Psoas muscle (tissue), 8 donors: ENCODE measurements at regions of chr9 and their contacts with region 1.

Region 1: DNA sequence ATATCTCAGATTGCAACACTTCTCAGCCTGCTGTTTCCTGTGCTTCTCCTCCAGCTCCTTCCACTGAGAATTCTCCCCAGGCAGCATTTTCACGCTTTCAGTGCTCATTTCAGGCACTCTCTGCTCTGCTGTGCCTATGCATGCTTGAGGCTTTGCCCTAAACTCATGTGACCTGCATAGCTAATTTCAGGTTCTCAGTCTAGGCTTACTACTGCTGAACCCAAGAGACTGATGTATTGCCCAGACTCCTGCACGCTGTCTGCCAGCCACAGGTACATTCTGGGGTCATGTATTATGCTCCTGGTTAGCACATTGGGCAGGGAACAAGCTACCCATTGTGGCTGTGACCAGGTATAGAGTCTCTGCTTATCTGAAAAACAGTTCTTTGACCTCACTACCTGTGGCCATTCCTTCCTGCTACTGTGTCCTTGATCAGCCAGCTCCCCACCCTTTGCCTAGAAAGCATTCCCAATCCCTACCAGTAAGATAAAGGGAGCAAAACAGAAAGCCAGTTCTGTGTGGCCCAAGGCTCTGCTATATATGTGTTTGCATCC is 34.7 kb downstream of the PIP5K1B start:
- DNase-seq: no peak
- ATAC-seq: no peak
- H3K4me3 ChIP-seq: no peak overlapping the region
- H3K27ac ChIP-seq: no peak overlapping the region
- H3K4me1 ChIP-seq: no peaks in the 10 kb centered on the region
- H3K27me3 ChIP-seq: peaks cover 0 to 4% (median 0%) of the 10 kb centered on the region in 3 donors
- CTCF ChIP-seq: no peak

Region 2: DNA sequence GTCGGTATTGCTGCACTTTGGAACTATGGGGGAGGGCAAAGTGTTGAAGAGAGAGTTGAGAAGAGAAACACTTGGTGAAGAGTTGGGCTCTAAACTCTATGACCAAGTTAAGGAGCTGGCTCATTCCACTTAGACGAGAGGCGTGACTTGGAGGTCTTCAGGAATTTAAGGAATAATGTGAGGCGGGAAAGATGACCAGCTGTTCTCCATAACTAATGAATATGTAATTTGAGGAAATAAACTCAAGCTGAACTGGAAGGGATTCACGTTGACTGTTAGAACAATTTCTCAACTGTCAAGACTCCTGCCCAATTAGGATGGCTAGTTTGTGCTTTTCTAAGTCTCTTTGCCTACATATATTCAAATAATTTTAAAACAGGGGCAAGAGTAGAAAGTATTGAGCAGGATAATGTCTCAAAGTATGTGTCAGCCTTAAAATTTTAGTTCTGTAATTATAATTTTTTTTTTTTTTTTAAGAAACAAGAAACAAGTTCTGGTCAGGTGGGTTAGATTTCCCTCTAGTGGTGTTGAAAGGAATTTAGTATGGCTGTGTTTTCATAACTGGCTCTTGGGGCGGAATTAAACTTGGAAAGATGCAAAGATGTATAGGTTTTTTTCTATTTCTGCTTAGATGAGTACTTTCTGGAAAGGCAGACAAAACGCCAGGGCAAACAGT is 232.4 kb before region 1 on chr9:
- intact Hi-C with region 1: no loop called
- DNase-seq: no peak
- ATAC-seq: peak in 1 of 4 donors; percentile 80
- H3K4me3 ChIP-seq: no peak overlapping the region
- H3K27ac ChIP-seq: no peak overlapping the region
- H3K4me1 ChIP-seq: peaks cover 4% of the 10 kb centered on the region
- H3K27me3 ChIP-seq: no peaks in the 10 kb centered on the region
- CTCF ChIP-seq: peak; percentile 70

Region 3: DNA sequence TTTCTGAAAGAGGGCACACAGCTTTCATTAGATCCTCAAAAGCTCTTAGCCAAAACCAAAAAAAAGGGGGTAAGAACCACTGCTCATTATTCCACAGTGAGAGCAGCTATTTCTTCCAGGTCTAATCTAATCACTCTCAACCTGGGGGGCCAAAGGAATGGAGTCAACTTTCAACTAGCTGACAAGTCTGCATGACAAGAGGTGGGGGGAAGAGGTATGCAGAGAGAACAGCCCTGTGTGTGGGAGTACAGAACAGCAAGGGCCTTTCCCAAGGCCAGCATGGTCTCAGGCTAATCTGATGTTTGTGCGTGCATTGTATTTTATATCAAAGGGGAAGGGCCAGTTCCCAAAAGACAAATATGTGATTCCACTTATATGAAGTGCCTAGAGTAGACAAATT is 71.6 kb before region 1 on chr9:
- intact Hi-C with region 1: loop called in 1 of 2 experiments (anchors 2 kb)
- DNase-seq: no peak
- ATAC-seq: no peak
- H3K4me3 ChIP-seq: no peak overlapping the region
- H3K27ac ChIP-seq: no peak overlapping the region
- H3K4me1 ChIP-seq: no peaks in the 10 kb centered on the region
- H3K27me3 ChIP-seq: peaks cover 0 to 2% (median 0%) of the 10 kb centered on the region in 3 donors
- CTCF ChIP-seq: no peak

Region 4: DNA sequence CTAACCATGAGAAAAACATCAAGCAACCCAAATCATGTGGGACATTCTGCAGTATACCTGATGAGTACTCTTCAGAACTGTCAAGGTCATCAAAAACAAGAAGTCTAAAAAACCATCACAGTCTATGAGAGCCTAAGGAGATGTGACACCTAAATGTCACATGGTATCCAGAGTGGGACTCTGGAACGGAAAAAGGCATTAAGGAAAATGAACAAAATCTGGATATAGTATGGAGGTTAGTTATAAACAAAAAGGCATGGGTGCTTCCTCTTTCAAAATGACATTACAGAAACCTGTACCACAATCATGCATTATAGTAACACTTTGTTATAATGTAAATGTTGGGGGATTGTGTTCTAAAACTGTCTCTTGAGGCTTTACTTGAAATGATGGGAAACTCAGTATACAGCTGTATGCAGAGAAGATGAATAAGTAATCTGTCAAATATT is 226.8 kb after region 1 on chr9:
- intact Hi-C with region 1: loop called in 1 of 2 experiments (anchors 10 kb)
- DNase-seq: no peak
- ATAC-seq: no peak
- H3K4me3 ChIP-seq: no peak overlapping the region
- H3K27ac ChIP-seq: no peak overlapping the region
- H3K4me1 ChIP-seq: no peaks in the 10 kb centered on the region
- H3K27me3 ChIP-seq: no peaks in the 10 kb centered on the region
- CTCF ChIP-seq: no peak